GM10248 (cell line): ENCODE measurements at regions of chr4 and their contacts with region 1.

Region 1: GRCh38 chr4:89024051-89024675 is 32.8 kb downstream of the FAM13A start:
- DNase-seq: peak; percentile 59
- CTCF ChIP-seq: peak; percentile 74

Region 2: DNA sequence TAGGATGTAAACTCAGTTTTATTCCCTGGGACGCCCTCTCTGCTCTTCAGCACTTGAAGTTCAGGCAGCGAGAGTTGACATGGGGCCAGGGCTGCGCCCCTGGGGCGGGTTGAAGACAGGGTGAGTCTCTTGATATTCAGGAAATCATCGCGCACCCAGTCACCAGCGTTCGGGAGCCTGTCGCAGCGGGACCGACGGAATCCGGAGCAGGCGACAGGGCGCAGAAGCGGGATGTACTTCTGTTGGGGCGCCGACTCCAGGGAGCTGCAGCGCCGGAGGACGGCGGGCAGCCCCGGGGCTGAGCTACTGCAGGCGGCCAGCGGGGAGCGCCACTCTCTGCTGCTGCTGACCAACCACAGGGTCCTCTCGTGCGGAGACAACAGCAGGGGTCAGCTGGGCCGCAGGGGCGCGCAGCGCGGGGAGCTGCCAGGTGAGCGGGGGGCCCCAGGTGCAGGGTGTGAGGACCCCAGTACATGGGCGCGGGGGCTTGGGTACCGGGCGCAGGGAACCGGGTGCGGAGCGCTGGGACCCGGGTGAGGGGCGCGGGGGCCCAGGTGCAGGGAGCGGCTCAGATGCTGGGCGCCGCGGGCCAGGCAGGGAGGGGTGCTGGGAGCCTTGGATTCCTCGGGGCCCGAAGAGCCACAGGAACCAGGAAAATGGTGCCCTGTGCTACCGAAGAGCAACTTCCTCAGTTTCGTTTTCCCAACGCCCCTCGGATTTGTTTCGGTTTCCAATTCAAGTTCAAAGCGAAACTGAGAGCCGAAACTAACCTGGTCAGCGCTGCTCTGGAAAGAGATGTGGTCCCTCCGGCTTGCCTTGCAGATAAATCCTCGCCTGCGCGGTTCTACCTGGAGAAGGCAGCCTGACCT is 645.2 kb before region 1 on chr4 and contains the start of gene HERC6:
- CTCF ChIA-PET with region 1: no interaction called
- POLR2A ChIA-PET with region 1: no interaction called
- DNase-seq: peak; percentile 84
- CTCF ChIP-seq: peak; percentile 79

Region 3: DNA sequence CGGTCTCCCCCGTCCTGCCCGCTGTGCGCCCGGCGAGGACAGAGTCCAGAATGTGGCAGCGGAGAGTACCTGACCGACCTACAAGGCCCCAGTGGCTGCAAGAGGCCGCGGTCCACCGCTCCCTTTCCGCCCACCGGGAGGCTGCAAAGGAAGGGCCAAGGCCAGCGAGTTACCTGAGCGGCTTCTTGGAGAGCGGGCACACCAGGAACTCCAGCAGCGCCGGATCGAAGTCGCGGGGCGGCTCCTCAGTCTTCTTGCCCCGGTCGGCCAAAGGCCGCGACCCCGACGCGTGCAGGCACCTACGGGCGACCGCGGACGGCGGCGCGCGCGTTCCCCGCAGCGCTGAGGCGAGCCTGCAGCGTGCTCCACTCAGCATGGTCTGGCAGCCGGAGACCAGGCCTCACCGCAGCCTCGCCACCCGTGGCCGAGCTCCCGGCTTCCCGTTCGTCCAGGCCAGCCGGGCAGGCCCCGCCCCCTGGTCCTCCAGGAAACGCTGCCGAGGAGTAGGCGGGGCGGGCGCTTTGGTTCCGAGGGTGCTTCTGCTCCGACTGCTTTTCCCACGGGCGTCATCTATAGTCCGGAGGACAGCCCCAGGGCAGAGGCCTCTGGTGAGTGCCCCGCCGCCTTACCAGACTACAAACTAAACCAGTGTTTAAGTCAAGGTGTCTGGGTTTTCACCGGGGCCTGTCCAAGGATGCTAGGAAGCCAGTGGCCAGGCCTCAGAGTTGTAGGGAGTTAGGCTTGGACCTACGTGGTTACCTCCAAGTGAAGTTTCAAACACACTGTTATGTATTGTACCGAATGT is 500.6 kb before region 1 on chr4 and contains the start of gene PYURF:
- CTCF ChIA-PET with region 1: interaction called, 15 read pairs
- POLR2A ChIA-PET with region 1: no interaction called
- DNase-seq: peak; percentile 88
- CTCF ChIP-seq: no peak

Region 4: DNA sequence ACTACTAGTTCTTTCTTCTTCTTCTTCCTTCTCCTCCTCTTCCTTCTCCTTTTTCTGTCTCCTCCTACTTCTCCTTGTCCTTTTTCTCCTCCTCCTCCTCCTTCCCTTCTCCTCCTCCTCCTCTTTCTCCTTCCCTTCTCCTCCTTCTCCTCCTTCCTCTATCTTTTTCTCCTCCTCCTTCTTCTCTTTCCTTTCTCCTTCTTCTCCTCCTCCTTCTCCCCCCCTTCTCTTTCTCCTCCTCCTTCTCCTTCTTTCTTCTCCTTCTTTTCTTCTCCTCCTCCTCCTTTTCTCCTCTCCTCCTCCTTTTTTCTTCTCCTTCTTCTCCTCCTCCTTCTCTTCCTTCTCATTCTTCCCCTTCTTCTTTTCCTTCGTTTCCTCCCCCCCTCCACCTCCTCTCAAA is 304.8 kb before region 1 on chr4:
- CTCF ChIA-PET with region 1: no interaction called
- POLR2A ChIA-PET with region 1: no interaction called
- DNase-seq: no peak
- CTCF ChIP-seq: no peak

Region 5: DNA sequence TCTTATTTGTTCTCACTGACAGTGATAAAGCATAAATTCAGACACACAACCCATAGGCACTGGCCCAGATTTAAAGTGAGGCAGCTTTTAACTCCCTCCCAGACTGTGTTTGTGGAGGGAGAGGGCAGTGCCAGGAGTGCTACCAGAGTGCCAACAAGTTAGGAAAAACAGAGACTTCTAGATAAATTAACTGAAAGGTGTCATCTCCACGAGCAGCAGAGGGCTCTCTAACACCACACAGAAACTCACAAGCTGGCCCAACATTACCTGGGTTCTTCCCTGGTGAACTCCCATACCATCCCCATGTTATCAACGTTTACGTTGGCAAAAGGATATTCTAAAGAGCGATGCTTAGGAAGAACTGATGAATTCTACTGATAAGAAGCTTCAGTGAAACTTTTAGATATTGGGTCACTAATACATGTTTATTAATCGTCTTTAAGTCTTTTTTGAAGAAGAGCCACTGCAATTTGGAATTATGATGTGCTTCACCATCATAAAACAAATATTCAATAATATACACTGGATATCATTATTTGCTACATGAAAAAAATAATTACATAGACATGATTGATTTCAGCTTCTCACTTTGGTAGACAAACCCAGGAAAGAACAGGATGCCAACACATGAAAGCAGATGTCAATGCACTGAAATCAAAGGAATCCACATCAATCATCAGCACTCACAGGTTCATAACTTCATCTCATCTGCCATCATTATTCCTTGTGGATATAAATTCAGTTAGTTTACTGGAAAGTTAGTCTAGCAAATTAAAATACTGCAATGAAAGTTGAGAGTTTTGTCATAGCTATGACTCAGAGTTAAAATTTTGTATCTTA is 205.3 kb before region 1 on chr4:
- CTCF ChIA-PET with region 1: interaction called, 154 read pairs
- POLR2A ChIA-PET with region 1: no interaction called
- DNase-seq: peak; percentile 14
- CTCF ChIP-seq: peak; percentile 48

Region 6: DNA sequence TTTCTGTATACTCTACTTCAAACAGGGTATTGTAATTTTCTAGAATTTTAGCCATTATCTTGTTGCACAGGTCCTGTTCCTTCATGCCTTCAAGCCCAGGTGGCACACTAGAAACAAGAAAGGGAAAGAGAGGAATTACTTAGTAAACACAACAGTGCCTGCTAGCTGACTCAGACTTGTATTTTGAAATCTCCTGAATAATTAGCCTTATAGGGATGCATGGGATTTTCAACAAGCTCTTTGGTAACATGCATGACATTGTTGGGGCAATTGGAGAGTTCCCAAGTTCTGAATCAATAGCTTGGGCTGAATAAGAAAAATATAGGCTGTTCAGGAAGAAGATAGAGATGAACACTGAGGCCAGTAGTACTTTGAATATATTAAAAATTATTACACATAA is 86.0 kb before region 1 on chr4:
- CTCF ChIA-PET with region 1: no interaction called
- POLR2A ChIA-PET with region 1: no interaction called
- DNase-seq: no peak
- CTCF ChIP-seq: no peak

Region 7: GRCh38 chr4:89009115-89009514 is 15.0 kb before region 1 on chr4:
- CTCF ChIA-PET with region 1: interaction called, 24 read pairs
- POLR2A ChIA-PET with region 1: no interaction called
- DNase-seq: no peak
- CTCF ChIP-seq: no peak

Region 8: DNA sequence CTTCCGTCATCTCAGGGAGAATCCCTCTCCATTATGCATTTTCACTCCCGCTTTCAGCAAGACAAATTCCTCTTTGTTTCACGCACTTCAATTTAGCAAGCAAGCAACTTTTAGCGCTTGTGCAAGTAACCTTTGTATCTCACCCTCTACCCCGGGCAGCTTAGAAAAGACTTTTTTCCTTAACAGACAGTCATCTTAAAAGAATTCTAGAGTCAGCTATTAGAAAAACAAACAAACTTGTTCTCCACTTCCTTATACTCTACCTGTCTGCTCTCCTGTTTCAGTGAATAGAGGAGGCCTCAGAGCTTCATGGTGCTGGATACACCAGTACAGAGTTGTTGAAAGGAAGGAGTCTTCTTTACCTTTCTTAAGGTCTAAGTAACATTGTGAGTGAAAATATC is 99.3 kb after region 1 on chr4:
- CTCF ChIA-PET with region 1: no interaction called
- POLR2A ChIA-PET with region 1: no interaction called
- DNase-seq: no peak
- CTCF ChIP-seq: no peak